Activated CD4-positive, alpha-beta T cell treated with anti-CD3 and anti-CD28 coated beads for 36 hours (primary cell): ENCODE measurements at regions of chr1 and their contacts with region 1.

Region 1: DNA sequence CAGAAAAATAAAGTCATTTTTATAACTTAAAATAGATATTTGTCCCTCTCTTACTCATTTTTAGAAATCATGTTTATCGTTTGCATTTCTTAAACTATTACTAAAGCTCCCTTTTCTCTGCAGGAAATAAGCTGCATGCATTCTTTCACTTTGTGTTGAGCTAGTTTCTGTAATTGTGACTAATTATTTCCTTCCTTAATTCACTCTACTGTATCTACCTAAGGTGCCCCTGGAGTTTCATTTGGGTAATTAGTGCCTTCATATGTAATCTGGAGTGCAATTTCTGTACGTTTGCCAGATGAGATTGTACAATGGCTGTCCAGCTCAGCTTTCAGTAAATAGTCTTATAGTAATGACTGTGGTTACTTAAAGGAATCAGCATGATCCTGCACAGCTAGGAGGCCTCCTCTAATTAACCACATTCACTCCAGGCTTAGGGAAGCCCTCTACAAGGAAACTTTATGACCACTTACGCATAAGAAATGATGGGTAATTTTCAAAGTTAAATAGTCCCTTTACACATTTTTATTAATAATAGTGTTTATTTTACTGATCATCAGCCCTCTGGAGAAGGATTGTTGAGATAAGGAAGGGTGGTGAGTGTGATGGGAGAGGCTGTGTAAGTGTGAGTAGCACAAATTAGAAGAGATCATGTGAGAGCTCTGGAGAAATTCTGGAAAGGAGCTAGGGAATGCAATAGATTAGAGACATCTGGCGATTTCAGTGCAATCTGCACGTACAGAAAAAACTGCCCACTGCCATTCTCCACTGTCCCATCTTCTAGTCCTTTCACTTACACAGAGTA is 86.8 kb downstream of the LRRC8C start:
- DNase-seq: no peak
- ATAC-seq: peak; percentile 83
- H3K4me3 Mint-ChIP-seq: peak overlapping the region; percentile 63
- H3K27ac Mint-ChIP-seq: peak overlapping the region; percentile 100
- H3K4me1 Mint-ChIP-seq: peaks cover 89% of the 10 kb centered on the region
- H3K27me3 Mint-ChIP-seq: no peaks in the 10 kb centered on the region

Region 2: GRCh38 chr1:89524369-89525168 is 195.1 kb before region 1 on chr1 and contains the start of gene LRRC8B:
- CTCF ChIA-PET with region 1: no interaction called
- POLR2A ChIA-PET with region 1: no interaction called
- intact Hi-C with region 1: loop called (anchors 1 to 2 kb)
- DNase-seq: peak; percentile 94
- ATAC-seq: peak; percentile 71
- H3K4me3 Mint-ChIP-seq: no peak within 1 kb of the TSS
- H3K27ac Mint-ChIP-seq: no peak within 1 kb of the TSS
- H3K4me1 Mint-ChIP-seq: peaks cover 24% of the 10 kb centered on the region
- H3K27me3 Mint-ChIP-seq: no peaks in the 10 kb centered on the region
- total RNA-seq, gene LRRC8B: 38.9 to 41.5 TPM

Region 3: DNA sequence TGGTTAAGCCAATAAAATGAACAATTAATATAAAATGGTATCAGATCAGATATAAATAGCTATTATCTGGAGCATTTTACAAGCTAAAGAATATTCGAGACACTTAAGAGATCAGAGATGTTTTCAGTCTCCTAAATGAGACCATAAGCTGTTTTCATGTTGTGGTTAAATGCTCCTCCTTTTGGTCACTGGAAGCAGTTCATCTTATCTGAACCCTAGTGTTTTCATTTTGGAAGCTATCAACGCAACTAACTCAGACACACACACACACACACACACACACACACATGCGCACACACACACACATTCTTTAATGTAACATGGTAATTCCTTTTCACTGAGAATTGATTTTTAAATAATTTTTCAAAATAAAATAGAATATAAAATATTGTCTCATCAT is 96.8 kb before region 1 on chr1:
- CTCF ChIA-PET with region 1: interaction called, 11 read pairs
- POLR2A ChIA-PET with region 1: interaction called, 12 read pairs
- intact Hi-C with region 1: no loop called
- DNase-seq: no peak
- ATAC-seq: no peak
- H3K4me3 Mint-ChIP-seq: no peak overlapping the region
- H3K27ac Mint-ChIP-seq: no peak overlapping the region
- H3K4me1 Mint-ChIP-seq: peaks cover 63% of the 10 kb centered on the region
- H3K27me3 Mint-ChIP-seq: no peaks in the 10 kb centered on the region

Region 4: GRCh38 chr1:89675677-89676076 is 44.0 kb before region 1 on chr1:
- CTCF ChIA-PET with region 1: interaction called, 13 read pairs
- POLR2A ChIA-PET with region 1: interaction called, 3 read pairs
- intact Hi-C with region 1: loop called in 1 of 2 experiments (anchors 5 kb)
- DNase-seq: no peak
- ATAC-seq: peak; percentile 75
- H3K4me3 Mint-ChIP-seq: no peak overlapping the region
- H3K27ac Mint-ChIP-seq: peak overlapping the region; percentile 84
- H3K4me1 Mint-ChIP-seq: peaks cover 78% of the 10 kb centered on the region
- H3K27me3 Mint-ChIP-seq: no peaks in the 10 kb centered on the region

Region 5: DNA sequence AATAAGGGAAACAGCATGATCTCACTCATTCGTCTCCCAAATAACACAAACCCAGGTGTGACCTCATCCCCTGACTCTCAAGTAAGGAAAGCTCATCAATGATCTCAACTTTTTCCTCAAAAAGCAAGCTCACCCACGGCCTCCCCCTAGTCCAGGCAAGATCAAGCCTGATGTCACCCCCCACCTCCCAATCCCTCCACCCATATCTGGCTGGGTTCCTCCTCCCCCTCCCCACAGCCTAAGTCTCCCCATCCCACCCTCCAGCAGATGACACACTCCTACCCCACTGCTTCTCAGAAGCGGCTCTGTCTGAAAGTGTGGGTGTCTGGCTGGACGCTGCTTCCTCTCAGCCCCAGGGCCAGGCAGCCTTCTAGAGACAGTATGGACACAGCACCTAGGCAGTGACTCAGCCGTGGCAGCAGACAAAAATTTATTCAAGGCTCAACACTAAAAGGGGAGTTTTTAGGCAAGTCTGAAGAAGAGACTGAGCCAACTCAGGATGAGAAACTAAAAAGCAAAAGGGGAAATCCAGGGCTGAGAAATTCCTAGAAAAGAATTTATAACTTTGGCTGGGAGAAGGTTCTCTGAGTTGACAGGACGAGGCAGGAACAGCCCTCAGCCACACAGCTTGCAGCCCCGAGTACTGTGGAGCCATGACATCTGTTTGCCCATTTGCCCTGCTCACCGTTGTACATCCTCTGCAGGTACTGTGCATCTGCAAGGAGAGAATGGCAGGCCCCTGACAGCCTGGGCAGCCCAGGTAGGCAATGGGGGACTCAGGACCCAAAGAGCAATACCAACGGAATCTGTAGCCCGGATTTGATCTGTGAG is 19.5 kb after region 1 on chr1:
- CTCF ChIA-PET with region 1: interaction called, 5 read pairs
- POLR2A ChIA-PET with region 1: interaction called, 4 read pairs
- intact Hi-C with region 1: loop called in 1 of 2 experiments (anchors 1 kb)
- DNase-seq: peak; percentile 76
- ATAC-seq: peak; percentile 94
- H3K4me3 Mint-ChIP-seq: peak overlapping the region; percentile 55
- H3K27ac Mint-ChIP-seq: peak overlapping the region; percentile 78
- H3K4me1 Mint-ChIP-seq: peaks cover 40% of the 10 kb centered on the region
- H3K27me3 Mint-ChIP-seq: no peaks in the 10 kb centered on the region

Region 6: GRCh38 chr1:89843281-89844121 is 123.8 kb after region 1 on chr1:
- CTCF ChIA-PET with region 1: no interaction called
- POLR2A ChIA-PET with region 1: no interaction called
- intact Hi-C with region 1: loop called in 1 of 2 experiments (anchors 5 kb)
- DNase-seq: peak; percentile 92
- ATAC-seq: peak; percentile 79
- H3K4me3 Mint-ChIP-seq: peak overlapping the region; percentile 94
- H3K27ac Mint-ChIP-seq: peak overlapping the region; percentile 97
- H3K4me1 Mint-ChIP-seq: peaks cover 59% of the 10 kb centered on the region
- H3K27me3 Mint-ChIP-seq: no peaks in the 10 kb centered on the region